Cardiac septum (tissue), 1 donor: ENCODE measurements at regions of chr9 and their contacts with region 1.

Region 1: GRCh38 chr9:96418074-96418809 is at the start of gene ZNF367:
- DNase-seq: peak; percentile 98
- total RNA-seq, gene ZNF367: 2.1 TPM

Region 2: DNA sequence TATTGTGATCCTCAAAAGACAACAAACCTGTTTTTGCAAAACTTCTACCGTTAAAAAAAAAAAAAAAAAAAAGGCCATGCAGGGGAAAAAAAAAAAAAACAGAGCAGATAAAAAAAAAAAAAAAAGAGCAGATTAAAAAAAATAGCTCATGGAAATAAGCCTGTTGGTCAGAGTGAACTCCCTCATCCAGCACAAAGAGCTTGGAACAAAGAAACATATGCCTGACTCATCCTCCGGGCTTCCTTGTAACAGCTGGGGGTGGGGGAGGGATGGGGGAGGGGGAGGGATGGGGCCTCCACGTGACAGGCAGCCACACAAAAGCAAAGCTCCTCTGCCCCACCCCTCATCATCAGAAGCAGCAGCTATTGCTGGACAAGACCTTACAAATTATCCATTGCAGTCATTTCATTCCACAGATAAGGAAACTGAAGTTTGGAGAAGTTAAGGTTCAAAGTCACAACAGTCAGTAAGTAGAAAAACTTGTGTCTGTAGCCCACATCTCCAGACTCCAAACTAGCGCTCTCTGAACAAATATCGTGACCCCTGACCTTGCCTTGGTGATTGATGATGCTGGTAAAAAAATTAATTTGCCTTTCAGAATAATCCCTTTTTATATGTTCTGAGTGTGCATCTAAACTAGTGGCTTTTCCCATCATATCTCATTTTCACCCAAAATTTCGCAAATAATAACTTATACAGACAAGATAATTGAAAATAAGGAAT is 73.6 kb before region 1 on chr9:
- intact Hi-C with region 1: loop called (anchors 2 kb)
- DNase-seq: no peak

Region 3: GRCh38 chr9:96449845-96450612 is 31.8 kb after region 1 on chr9 and contains the start of gene HABP4:
- intact Hi-C with region 1: loop called (anchors 2 kb)
- DNase-seq: peak; percentile 98
- total RNA-seq, gene HABP4: 29.7 TPM

Region 4: DNA sequence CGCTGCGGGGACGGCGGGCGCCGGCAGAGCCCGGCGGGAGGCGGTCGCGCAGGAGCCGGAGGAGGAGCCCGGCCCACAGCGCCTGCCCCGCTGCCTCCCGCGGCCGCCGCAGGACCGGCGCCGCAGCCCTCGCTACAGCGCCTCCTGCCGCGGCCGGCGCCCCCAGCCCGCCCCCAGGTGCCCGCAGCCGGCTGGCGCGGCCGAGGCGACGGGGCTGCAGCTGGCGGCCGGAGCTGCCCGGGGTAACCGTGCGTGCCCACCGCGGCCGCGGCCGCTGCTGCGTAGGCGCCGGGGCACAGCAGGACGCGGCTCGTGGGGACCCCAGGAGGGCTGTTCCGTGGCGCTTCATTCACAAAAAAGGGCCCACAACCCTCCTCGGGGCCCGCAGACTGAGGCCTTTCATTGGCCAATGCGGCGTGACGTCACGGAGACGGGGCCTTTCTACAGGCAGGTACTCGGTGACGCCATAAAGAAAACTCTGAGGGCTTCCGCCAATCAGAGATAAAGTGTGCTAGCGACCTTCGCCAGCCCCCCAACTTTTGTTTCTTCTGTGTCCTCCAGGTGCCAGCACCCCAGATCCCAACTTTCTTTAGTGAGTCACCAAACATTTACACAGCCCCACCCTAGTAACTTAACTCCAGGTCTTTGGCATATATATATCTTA is 201.4 kb after region 1 on chr9 and contains the start of gene CDC14B:
- intact Hi-C with region 1: loop called (anchors 5 kb)
- DNase-seq: peak; percentile 91
- total RNA-seq, gene CDC14B: 25.5 TPM